ENCODE measurements at regions of chr6 and their contacts with region 1.

Region 1: DNA sequence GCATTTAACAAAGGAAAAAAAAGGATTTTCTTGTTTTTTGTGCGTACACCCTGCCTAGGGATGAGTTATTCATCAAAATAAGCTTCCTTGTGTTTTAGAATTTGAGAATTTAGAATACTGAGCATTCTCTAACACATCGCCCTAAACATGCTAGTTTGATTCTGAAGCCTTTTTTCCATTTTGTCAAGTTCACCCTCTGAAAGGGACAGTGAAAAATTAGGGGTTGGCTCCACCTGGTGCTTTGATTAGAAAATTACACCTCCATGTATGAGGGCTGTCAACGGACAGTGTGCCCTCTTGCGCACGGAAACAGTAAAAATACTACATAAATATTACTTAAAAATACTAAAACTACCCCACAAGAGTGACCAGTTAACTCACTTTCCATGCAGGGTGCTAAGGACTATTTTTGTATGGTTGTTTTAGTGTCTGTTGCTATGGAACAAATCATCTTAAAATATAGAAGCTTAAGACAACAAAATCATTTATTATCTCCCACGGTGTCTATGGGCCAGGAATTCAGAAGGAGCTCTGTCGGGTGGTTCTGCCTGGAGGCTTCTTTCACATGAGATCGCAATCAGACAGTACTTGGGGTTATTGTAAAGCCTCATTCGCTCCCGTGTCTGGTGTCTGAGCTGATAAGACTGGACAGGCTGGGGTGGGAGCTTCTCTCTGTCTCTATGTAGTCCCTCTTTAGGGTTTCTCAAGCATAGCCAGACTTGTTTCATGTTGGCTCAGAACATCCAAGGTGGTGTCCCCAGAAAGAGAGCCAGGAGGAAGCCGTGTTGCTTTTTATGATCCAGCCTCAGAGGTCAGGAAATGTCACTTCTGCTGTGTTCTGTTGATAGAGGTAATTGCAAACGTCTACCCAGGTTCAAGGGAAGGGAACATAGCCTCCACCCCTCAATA is 41.1 kb upstream of the TMEM170B start:
- DNase-seq: peak; percentile 42 to 51
- ATAC-seq: peak; percentile 92

Region 2: GRCh38 chr6:11144393-11144851 is 352.0 kb before region 1 on chr6:
- intact Hi-C with region 1: loop called (anchors 2 to 5 kb)
- DNase-seq: peak; percentile 71 to 90
- ATAC-seq: peak; percentile 96

Region 3: DNA sequence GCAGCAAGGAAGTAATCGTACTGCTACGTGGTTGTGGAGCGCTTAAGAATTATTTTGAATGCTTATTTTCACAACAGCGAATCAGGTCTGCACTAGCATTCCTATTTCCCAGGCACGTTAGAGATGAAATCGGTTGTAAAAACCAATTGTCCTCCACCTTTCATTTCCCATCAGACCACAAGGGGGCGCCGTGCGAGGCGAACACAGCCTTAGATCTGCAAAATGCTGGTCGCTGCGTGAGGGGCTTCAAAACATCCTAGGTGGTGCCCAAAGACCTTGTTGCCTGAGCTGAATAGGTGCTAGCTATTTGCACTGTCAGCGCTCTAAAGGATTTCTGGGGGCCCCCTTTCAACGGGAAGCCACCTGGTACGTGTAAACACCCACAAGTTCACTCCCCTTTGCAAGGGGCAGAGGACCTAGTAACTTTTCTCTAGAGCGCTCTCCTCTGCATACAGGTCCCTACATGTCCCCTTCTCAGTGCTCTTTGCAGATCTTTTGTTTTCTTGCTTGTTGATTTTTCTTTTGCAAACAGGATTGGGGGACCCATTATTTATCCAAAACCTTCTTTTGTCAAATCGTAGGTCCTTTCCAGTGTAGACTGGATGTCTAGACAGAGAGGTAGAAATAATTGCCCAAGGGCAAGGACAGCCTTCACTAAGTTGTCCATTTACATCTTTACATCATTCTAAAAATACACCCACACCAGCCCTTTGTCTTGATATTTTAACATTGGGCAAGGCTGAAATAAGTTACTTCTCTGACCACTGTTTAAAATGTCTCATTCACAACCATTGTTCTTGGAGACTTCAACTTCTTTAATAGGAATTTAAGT is 323.7 kb before region 1 on chr6:
- intact Hi-C with region 1: loop called in 1 of 2 experiments (anchors 1 kb)
- DNase-seq: peak; percentile 47 to 80
- ATAC-seq: peak; percentile 24

Region 4: GRCh38 chr6:11552442-11552841 is 56.0 kb after region 1 on chr6:
- intact Hi-C with region 1: loop called in 1 of 2 experiments (anchors 10 kb)
- DNase-seq: no peak
- ATAC-seq: no peak

Region 5: GRCh38 chr6:11575408-11576033 is 79.1 kb after region 1 on chr6:
- intact Hi-C with region 1: loop called in 1 of 2 experiments (anchors 10 kb)
- DNase-seq: peak; percentile 39 to 45
- ATAC-seq: peak; percentile 100

Measured in left colon (tissue), 2 donors.